Natural killer cell (primary cell): ENCODE measurements at regions of chr7 and their contacts with region 1.

Region 1: GRCh38 chr7:90424720-90425119 is 21.5 kb downstream of the CLDN12 start:
- DNase-seq: no peak
- ATAC-seq: no peak
- H3K4me3 ChIP-seq: no peak overlapping the region
- H3K4me3 Mint-ChIP-seq: no peak overlapping the region
- H3K27ac ChIP-seq: no peak overlapping the region
- H3K27ac Mint-ChIP-seq: no peak overlapping the region
- H3K4me1 ChIP-seq: no peaks in the 10 kb centered on the region
- H3K4me1 Mint-ChIP-seq: no peaks in the 10 kb centered on the region
- H3K27me3 ChIP-seq: no peaks in the 10 kb centered on the region
- H3K27me3 Mint-ChIP-seq: peaks cover 0 to 2% of the 10 kb centered on the region in 2 donors
- CTCF ChIP-seq: no peak

Region 2: DNA sequence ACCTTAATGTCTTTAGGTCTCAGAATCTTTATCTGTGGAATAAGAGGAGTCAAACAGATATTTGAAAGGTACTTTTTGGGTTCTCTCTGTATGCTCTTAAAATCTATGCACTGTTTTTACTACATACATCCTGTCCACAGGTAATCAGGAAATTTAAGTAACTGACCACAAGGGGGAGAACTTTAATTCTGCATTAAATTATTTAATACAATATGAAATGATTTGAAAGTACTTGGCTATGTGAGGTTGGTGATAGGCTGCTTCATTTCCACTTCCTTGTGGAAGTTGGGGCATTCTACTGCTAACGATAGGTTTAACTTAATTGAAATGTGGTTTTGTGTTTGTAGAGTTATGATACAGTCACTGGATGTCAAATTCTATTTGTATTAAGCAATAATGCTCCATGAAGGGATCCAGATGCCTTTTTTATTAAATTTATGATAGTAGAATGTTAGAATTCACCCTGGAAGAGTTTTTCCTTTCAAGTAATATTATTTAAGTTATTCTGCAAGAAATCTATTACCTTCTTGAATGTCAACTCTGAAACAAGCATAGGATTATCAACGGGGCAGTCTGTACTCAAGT is 1635.1 kb before region 1 on chr7:
- intact Hi-C with region 1: loop called (anchors 5 kb)
- DNase-seq: peak in 1 of 2 donors; percentile 35
- ATAC-seq: no peak
- H3K4me3 ChIP-seq: no peak overlapping the region
- H3K4me3 Mint-ChIP-seq: no peak overlapping the region
- H3K27ac ChIP-seq: no peak overlapping the region
- H3K27ac Mint-ChIP-seq: no peak overlapping the region
- H3K4me1 ChIP-seq: no peaks in the 10 kb centered on the region
- H3K4me1 Mint-ChIP-seq: no peaks in the 10 kb centered on the region
- H3K27me3 ChIP-seq: no peaks in the 10 kb centered on the region
- H3K27me3 Mint-ChIP-seq: no peaks in the 10 kb centered on the region
- CTCF ChIP-seq: no peak

Region 3: DNA sequence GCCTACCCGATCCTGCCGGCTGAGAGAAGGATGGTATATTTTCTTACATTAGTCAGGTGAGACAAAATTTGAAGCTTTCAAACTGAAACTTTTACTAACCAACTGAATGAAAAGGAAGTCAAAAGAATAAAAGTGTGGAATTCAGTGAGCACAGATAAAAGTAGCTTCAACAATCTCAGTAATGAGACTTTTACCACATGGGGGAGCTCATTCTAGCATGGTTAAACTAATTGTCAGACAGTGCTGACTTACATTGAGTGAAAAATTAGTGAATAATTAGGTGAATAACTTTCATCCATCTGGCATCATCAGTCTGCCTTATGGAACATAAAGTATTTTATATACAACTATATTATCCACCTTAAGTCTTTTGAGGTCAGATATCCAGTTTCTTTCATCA is 112.0 kb before region 1 on chr7:
- intact Hi-C with region 1: loop called (anchors 5 kb)
- DNase-seq: peak in 1 of 2 donors; percentile 40
- ATAC-seq: no peak
- H3K4me3 ChIP-seq: no peak overlapping the region
- H3K4me3 Mint-ChIP-seq: no peak overlapping the region
- H3K27ac ChIP-seq: no peak overlapping the region
- H3K27ac Mint-ChIP-seq: no peak overlapping the region
- H3K4me1 ChIP-seq: no peaks in the 10 kb centered on the region
- H3K4me1 Mint-ChIP-seq: no peaks in the 10 kb centered on the region
- H3K27me3 ChIP-seq: peaks cover 2% of the 10 kb centered on the region
- H3K27me3 Mint-ChIP-seq: peaks cover 13 to 43% of the 10 kb centered on the region in 2 donors
- CTCF ChIP-seq: no peak